SK-N-SH (cell line): ENCODE measurements at regions of chr5 and their contacts with region 1.

Region 1: DNA sequence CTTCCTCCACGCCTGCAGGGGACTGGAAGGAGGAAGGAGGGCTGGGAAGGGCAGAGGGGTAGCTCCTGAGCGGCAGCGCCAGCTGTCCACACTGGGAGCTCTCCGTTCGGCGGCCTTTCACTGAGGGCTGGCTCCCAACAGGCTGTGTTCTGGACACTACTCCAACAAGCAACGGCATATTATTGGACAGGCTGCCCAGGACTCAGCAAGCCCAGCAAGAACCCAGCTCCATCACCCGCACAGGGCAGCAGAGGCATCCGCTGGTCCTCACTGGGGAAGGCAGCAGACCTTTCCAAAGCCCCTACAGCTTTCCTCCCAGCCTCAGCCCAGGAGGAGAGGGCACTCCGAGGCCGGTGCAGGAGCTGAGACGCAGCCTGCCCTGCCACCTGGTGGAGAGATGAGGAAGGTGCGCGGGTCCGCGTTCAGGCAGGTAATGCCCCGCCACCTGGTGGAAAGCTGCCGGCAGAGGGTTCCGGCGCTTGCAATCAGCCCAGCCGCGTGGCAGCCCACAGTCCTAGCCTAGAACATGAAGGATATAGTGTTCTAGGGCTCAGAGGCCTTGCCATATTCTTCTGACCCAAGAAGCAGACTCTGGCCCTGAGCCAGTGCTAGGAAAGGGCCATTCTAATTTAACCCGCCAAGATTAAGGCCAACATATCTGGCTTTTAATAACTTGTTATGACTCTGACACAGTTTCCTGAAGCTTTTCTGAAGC is 74.4 kb downstream of the NRG2 start:
- DNase-seq: peak; percentile 91
- H3K4me3 ChIP-seq: peak overlapping the region in 1 of 2 experiments; percentile 28; a peak in 1 of 4 replicates
- H3K27ac ChIP-seq: no peak overlapping the region
- H3K4me1 ChIP-seq: peaks cover 0 to 16% of the 10 kb centered on the region in 2 experiments; a peak in 1 of 4 replicates
- H3K27me3 ChIP-seq: no peaks in the 10 kb centered on the region
- CTCF ChIP-seq: peak; percentile 97
- EP300 ChIP-seq: no peak
- RAD21 ChIP-seq: peak; percentile 99

Region 2: DNA sequence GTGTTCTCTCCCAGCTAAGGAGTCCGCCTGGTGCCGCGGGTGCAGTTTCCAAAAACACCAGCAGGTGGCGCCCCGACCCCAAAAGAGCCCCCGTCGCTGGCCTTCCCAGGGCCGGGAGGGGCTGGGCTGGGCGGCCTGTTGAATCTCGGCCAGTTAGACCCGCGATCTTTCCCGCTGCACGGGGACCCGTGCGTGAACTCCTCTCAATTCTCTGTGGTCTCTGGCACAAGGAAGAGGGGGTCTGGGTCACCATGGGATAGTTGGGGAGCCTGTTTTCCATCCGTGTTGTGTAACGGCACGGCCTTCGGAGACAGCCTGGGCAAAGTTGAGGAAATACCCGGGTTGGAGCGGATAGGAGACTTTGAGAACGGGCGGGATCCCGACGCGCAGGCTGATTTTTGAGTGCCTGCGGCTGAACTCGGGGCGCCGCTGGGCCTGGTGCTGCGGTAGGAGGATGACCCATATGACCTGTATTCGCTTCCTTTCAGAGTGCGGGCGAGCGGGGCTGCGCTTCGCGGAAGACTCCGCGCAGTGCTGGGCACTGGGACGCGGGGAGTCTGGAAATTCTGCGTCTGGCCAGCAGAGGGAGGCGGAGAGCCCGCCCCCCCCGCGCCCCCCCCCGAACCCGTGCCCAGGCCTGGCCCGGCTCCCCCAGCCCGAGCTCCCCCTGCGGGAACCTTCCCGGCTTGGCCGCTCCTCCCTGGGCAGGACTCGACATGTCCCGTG is 181.0 kb before region 1 on chr5:
- CTCF ChIA-PET with region 1: interaction called, 484 read pairs
- POLR2A ChIA-PET with region 1: interaction called, 10 read pairs
- DNase-seq: peak; percentile 98
- H3K4me3 ChIP-seq: peak overlapping the region; percentile 56 to 80
- H3K27ac ChIP-seq: no peak overlapping the region; a peak in 1 of 4 replicates
- H3K4me1 ChIP-seq: peaks cover 0 to 3% of the 10 kb centered on the region in 2 experiments; a peak in 1 of 4 replicates
- H3K27me3 ChIP-seq: no peaks in the 10 kb centered on the region; the same call in 1 of the 2 replicates
- CTCF ChIP-seq: peak; percentile 87
- EP300 ChIP-seq: no peak
- RAD21 ChIP-seq: peak; percentile 96

Region 3: GRCh38 chr5:139852696-139853095 is 116.0 kb before region 1 on chr5:
- CTCF ChIA-PET with region 1: interaction called, 67 read pairs
- POLR2A ChIA-PET with region 1: no interaction called
- DNase-seq: no peak
- H3K4me3 ChIP-seq: no peak overlapping the region
- H3K27ac ChIP-seq: no peak overlapping the region
- H3K4me1 ChIP-seq: peaks cover 0 to 5% of the 10 kb centered on the region in 2 experiments; a peak in 1 of 4 replicates
- H3K27me3 ChIP-seq: no peaks in the 10 kb centered on the region
- CTCF ChIP-seq: no peak
- EP300 ChIP-seq: no peak
- RAD21 ChIP-seq: no peak

Region 4: DNA sequence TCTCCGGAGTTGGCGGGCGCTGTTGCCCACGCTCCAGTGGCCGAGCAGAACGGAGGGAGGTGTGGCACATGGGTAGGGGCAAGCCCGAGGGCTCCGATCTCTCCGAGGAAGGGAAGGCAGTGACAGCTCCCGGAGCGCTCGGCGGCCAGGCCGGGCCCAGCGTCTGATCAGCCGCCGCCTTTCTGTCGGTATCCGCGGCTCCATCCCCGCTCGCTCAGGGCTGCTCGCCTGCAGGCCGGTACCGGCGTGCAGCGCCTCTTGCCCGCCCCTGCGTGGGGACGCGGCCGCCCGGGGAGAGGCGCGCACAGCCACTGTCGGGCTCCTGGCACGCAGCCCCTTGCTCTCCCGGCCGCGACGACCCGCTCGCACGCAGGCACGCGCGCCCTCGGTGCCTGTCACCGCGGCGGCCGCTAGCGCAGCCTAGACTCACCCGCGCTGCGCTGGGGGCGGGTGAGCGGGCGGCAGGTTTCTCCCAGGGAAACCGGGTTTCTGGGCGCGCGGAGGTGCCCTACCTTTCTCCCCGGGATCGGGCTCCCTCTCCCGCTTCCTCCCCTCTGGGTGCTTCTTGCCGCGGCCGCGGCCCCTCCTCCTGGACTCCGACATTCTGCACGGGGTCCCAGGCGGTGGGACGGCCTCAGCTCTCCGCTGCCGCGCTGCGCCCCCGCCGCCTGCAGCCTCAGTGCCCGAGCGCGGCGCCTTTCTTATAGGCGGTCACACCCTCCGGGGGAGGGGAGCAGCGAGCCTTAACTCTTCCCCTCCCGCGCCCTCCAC is 64.7 kb before region 1 on chr5:
- CTCF ChIA-PET with region 1: interaction called, 69 read pairs
- POLR2A ChIA-PET with region 1: no interaction called
- DNase-seq: peak; percentile 85
- H3K4me3 ChIP-seq: peak overlapping the region; percentile 16 to 47; a peak in 3 of 4 replicates
- H3K27ac ChIP-seq: no peak overlapping the region
- H3K4me1 ChIP-seq: peaks cover 0 to 36% of the 10 kb centered on the region in 2 experiments; a peak in 1 of 4 replicates
- H3K27me3 ChIP-seq: peaks cover 47% of the 10 kb centered on the region
- CTCF ChIP-seq: no peak
- EP300 ChIP-seq: no peak
- RAD21 ChIP-seq: no peak

Region 5: GRCh38 chr5:139955053-139955605 is 13.6 kb before region 1 on chr5:
- CTCF ChIA-PET with region 1: interaction called, 73 read pairs
- POLR2A ChIA-PET with region 1: no interaction called
- DNase-seq: no peak
- H3K4me3 ChIP-seq: no peak overlapping the region
- H3K27ac ChIP-seq: no peak overlapping the region
- H3K4me1 ChIP-seq: peaks cover 0 to 28% of the 10 kb centered on the region in 2 experiments; a peak in 1 of 4 replicates
- H3K27me3 ChIP-seq: no peaks in the 10 kb centered on the region
- CTCF ChIP-seq: no peak
- EP300 ChIP-seq: no peak
- RAD21 ChIP-seq: no peak

Region 6: DNA sequence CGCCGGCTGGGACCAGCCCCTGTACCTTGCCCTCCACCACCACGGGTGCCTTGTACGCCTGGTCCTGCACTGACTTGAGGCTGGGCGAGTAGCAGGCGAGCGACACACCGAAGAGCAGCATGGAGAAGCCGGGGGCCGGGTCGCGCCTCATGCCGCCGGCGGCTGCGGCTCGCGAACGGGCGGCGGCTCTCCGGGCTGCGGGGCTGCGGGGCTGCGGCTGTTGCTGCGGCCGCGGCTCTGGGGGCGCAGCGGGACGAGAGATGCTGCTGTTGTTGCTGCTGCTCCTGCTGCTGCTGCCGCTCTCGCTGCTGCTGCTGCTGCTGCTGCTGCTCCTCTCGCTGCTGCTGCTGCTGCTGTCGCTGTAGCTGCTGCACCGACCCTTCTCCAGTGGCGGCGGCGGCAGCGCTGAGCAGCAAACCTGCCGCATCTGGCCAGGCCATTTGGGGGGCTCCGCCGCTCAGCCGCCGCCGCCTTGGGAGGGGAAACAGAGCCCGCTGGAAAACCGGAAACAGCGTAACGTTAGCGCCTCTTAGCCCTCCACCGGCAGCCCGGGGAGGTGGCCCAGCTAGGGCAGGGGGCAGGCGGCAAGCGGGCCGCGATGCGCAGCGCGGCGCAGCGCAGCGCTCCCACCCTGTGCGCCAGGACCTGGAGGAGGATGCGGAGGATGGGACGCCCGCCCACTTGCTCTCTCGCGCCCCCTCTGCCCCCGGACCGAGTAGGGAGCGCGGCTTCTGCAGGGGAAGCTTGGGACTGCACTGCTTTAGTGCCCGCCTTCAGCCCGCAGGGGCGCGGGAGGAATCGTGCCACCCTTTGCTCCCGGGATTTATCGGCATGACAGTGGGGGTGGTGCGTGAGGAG is 74.2 kb after region 1 on chr5 and contains the start of gene NRG2:
- CTCF ChIA-PET with region 1: interaction called, 58 read pairs
- POLR2A ChIA-PET with region 1: no interaction called
- DNase-seq: peak; percentile 94
- H3K4me3 ChIP-seq: peak within 1 kb of the TSS; percentile 88 to 92
- H3K27ac ChIP-seq: peak within 1 kb of the TSS; percentile 67 to 93; a peak in 3 of 4 replicates
- H3K4me1 ChIP-seq: peaks cover 0 to 32% of the 10 kb centered on the region in 2 experiments; a peak in 2 of 4 replicates
- H3K27me3 ChIP-seq: 0 out of 2 replicates have a peak, but pooled peaks cover 4% of the 10 kb centered on the region
- CTCF ChIP-seq: peak; percentile 62
- EP300 ChIP-seq: no peak
- RAD21 ChIP-seq: no peak
- polyA plus RNA-seq, gene NRG2: 3.5 and 3.7 TPM in 2 replicates